Tibial artery (tissue), 4 donors: ENCODE measurements at regions of chr1 and their contacts with region 1.

Region 1: GRCh38 chr1:195908121-195908520 is 700.1 kb downstream of the KCNT2 start:
- DNase-seq: no peak
- H3K4me3 ChIP-seq: no peak overlapping the region
- H3K27ac ChIP-seq: no peak overlapping the region
- H3K4me1 ChIP-seq: no peaks in the 10 kb centered on the region
- H3K27me3 ChIP-seq: no peaks in the 10 kb centered on the region
- CTCF ChIP-seq: no peak

Region 2: DNA sequence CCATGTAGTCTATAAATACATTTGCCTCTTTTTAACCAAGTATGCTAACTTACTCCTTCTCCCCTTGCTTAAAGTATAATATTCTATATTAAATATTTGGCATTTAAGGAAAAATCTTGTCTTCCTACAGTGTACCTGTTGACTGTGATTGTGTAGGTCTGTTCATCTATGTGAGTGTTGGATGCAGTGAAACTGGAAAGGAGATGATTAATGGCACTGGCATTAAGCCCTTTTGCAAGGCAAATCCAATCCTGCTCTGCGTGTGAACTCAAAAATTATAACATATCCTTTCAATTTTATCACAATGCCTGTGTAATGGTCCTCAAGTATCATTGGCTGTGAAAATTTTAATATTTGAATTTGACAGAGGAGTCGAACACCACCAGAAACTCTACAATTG is 135.1 kb after region 1 on chr1:
- intact Hi-C with region 1: no loop called
- DNase-seq: no peak
- H3K4me3 ChIP-seq: no peak overlapping the region
- H3K27ac ChIP-seq: no peak overlapping the region
- H3K4me1 ChIP-seq: no peaks in the 10 kb centered on the region
- H3K27me3 ChIP-seq: no peaks in the 10 kb centered on the region
- CTCF ChIP-seq: no peak

Region 3: GRCh38 chr1:196632797-196633196 is 724.7 kb after region 1 on chr1:
- intact Hi-C with region 1: loop called (anchors 5 kb)
- DNase-seq: no peak
- H3K4me3 ChIP-seq: no peak overlapping the region
- H3K27ac ChIP-seq: no peak overlapping the region
- H3K4me1 ChIP-seq: no peaks in the 10 kb centered on the region
- H3K27me3 ChIP-seq: no peaks in the 10 kb centered on the region
- CTCF ChIP-seq: no peak